ENCODE measurements at regions of chr4 and their contacts with region 1.

Region 1: GRCh38 chr4:109506890-109507289 is 53.2 kb upstream of the MCUB start:
- DNase-seq: no peak
- ATAC-seq: no peak
- H3K4me3 ChIP-seq: no peak overlapping the region
- H3K4me3 Mint-ChIP-seq: no peak overlapping the region
- H3K27ac ChIP-seq: no peak overlapping the region
- H3K27ac Mint-ChIP-seq: no peak overlapping the region
- H3K4me1 ChIP-seq: no peaks in the 10 kb centered on the region
- H3K4me1 Mint-ChIP-seq: peaks cover 5% of the 10 kb centered on the region
- H3K27me3 ChIP-seq: no peaks in the 10 kb centered on the region
- H3K27me3 Mint-ChIP-seq: no peaks in the 10 kb centered on the region
- CTCF ChIP-seq: no peak

Region 2: GRCh38 chr4:107824353-107825071 is 1682.4 kb before region 1 on chr4 and contains the start of gene SGMS2:
- CTCF ChIA-PET with region 1: no interaction called
- POLR2A ChIA-PET with region 1: no interaction called
- intact Hi-C with region 1: loop called in 1 of 2 experiments (anchors 5 kb)
- DNase-seq: peak in 5 of 9 experiments; percentile 2 to 39 (median 7)
- ATAC-seq: no peak
- H3K4me3 ChIP-seq: peak within 1 kb of the TSS in 1 of 2 experiments; percentile 6
- H3K4me3 Mint-ChIP-seq: peak within 1 kb of the TSS; percentile 75
- H3K27ac ChIP-seq: no peak within 1 kb of the TSS
- H3K27ac Mint-ChIP-seq: no peak within 1 kb of the TSS
- H3K4me1 ChIP-seq: no peaks in the 10 kb centered on the region
- H3K4me1 Mint-ChIP-seq: peaks cover 8% of the 10 kb centered on the region
- H3K27me3 ChIP-seq: peaks cover 3 to 4% of the 10 kb centered on the region in 2 experiments
- H3K27me3 Mint-ChIP-seq: peaks cover 46% of the 10 kb centered on the region
- CTCF ChIP-seq: no peak
- total RNA-seq, gene SGMS2: not detected

Region 3: GRCh38 chr4:111011458-111011857 is 1504.6 kb after region 1 on chr4:
- CTCF ChIA-PET with region 1: no interaction called
- POLR2A ChIA-PET with region 1: no interaction called
- intact Hi-C with region 1: no loop called
- DNase-seq: no peak
- ATAC-seq: no peak
- H3K4me3 ChIP-seq: no peak overlapping the region
- H3K4me3 Mint-ChIP-seq: no peak overlapping the region
- H3K27ac ChIP-seq: no peak overlapping the region
- H3K27ac Mint-ChIP-seq: no peak overlapping the region
- H3K4me1 ChIP-seq: no peaks in the 10 kb centered on the region
- H3K4me1 Mint-ChIP-seq: no peaks in the 10 kb centered on the region
- H3K27me3 ChIP-seq: no peaks in the 10 kb centered on the region
- H3K27me3 Mint-ChIP-seq: no peaks in the 10 kb centered on the region
- CTCF ChIP-seq: no peak

Measured in CD8-positive, alpha-beta T cell (primary cell).